ENCODE measurements at regions of chr11 and their contacts with region 1.

Region 1: DNA sequence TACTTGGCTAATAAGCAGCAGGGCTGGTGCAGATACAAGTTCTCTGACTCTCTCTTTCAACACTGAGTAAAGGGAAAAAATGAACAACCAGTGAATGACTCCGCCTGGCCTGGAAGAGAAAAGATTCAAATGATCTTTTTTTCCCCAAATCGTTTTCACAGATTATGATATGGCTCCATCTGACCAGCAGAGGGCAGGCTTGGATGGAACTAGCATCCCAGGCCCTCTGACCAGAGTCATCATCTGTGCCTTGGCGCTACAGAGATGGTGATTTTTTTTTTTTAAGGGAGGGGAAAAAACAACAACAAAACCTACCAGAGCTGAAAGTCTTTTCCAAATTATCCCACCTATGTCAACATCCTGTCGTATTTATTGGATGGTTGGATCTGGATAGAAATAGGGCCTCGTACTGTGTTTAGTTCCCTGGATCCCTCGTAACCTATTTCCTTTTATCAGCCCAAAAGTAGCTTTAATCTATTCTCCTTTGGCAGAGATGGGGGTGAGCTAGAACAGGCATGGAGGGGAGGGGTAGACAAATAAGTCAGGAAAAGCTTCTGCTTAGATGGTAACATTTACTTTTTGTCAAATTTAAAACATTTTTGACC is 69.7 kb downstream of the PRSS23 start:
- DNase-seq: peak; percentile 67
- H3K4me3 ChIP-seq: no peak overlapping the region
- H3K27ac ChIP-seq: peak overlapping the region; percentile 16
- H3K4me1 ChIP-seq: no peaks in the 10 kb centered on the region
- H3K27me3 ChIP-seq: no peaks in the 10 kb centered on the region
- CTCF ChIP-seq: peak; percentile 69 to 70
- POLR2A ChIP-seq: no peak

Region 2: DNA sequence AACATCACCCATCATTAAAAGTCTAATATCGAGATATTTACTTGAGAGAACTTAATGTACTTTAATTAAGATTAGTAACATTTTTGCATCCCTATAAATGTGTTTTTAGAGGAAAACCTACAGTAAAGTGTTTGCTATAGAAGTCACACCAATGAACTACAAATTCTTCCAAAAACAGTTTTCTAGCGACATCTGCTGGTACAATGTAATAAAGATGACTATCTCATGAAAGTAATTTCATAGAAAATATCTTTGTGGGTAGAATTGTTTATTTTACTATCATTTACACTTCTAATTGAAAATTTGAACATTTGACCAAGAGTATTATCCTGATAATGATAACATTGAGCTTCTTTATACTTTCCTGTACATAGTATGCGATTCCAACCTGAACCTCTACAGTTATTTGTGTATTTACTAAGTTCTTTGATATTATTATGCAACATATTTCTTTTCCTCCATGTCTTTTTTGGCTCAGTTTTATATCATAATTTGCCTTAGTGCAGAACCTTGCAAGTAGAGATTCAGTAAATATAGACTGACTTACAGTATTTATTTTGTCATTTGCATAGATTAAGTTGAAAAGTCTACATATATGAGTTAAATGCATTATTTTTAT is 420.3 kb after region 1 on chr11:
- CTCF ChIA-PET with region 1: interaction called, 9 read pairs
- POLR2A ChIA-PET with region 1: no interaction called
- dilution Hi-C with region 1: no loop called
- intact Hi-C with region 1: loop called (anchors 1 kb)
- DNase-seq: peak; percentile 75
- H3K4me3 ChIP-seq: no peak overlapping the region
- H3K27ac ChIP-seq: no peak overlapping the region
- H3K4me1 ChIP-seq: peaks cover 2% of the 10 kb centered on the region
- H3K27me3 ChIP-seq: no peaks in the 10 kb centered on the region
- CTCF ChIP-seq: peak in 1 of 2 donors; percentile 34
- POLR2A ChIP-seq: no peak